Natural killer cell (primary cell): ENCODE measurements at regions of chr18 and their contacts with region 1.

Region 1: DNA sequence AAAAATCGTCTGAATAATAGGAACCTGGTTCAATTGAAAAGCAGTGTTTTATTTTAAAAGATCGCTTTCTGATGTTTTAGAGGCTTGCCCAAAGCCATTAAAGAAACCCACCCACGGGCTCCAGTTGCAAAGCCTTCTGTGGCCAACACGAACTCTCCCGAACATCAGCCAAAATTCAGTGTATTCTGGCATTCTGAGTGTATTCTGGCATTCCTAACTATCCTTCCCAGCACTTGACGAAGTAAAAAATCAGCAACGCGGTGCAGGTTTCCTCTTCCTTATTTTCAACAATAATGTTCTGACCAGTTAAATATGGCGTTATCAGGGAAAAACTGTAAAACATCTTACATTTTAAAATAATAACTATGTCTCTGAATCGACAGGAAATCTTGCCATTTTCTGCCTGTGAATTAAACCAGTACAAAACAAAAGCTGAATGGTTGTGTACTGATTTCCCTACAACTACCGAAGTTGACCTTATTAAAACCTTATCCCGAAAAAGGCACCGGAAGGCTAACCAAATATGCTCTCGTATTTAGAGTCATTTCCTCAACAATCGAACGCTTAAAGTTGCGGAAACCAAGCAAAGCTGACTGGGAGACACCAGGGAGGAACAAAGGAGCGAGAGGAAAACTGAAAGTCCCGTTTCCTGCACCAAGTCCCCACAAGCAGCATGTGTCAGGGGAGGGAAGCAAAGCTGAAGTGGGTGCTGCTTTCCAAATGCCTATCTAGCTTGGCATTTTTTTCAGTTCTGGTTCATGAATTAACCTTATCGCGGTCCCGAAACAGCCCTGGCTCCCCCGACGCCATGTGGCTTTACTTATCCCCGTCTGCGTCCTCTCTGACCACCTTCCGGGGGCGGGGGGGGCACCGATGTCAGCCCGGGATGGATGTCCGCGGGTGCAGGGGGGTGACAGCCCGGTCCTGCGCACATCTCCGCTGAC is 44.3 kb downstream of the ZNF516 start:
- DNase-seq: peak in 1 of 2 donors; percentile 34
- ATAC-seq: peak; percentile 25 to 56 (median 46)
- H3K4me3 ChIP-seq: peak overlapping the region; percentile 56
- H3K4me3 Mint-ChIP-seq: peak overlapping the region; percentile 97
- H3K27ac ChIP-seq: peak overlapping the region; percentile 30
- H3K27ac Mint-ChIP-seq: peak overlapping the region; percentile 81 to 92
- H3K4me1 ChIP-seq: peaks cover 32% of the 10 kb centered on the region
- H3K4me1 Mint-ChIP-seq: peaks cover 79 to 86% of the 10 kb centered on the region in 2 donors
- H3K27me3 ChIP-seq: no peaks in the 10 kb centered on the region
- H3K27me3 Mint-ChIP-seq: no peaks in the 10 kb centered on the region
- CTCF ChIP-seq: no peak

Region 2: DNA sequence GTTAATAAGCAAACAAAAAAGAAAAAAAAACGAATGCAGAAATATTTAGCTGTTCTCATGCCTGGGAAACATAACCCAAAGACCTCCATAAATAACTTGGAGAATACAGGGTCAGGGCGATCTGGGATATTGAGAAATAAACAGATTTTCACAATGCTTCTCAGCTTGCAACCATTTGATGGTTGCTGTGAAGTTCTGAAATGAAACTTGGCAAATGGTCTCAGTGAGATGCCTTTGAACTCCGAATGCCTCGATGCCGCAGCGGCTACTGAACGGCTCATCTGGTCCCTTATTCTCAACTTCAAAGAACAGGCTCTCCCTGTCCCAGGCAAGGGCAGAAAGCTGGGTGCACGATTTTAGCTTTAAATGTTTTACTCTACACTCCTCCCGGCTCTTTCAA is 33.8 kb before region 1 on chr18:
- intact Hi-C with region 1: loop called (anchors 5 kb)
- DNase-seq: no peak
- ATAC-seq: no peak
- H3K4me3 ChIP-seq: no peak overlapping the region
- H3K4me3 Mint-ChIP-seq: peak overlapping the region; percentile 25
- H3K27ac ChIP-seq: no peak overlapping the region
- H3K27ac Mint-ChIP-seq: peak overlapping the region in 1 of 2 donors; percentile 10
- H3K4me1 ChIP-seq: peaks cover 25% of the 10 kb centered on the region
- H3K4me1 Mint-ChIP-seq: peaks cover 68 to 80% of the 10 kb centered on the region in 2 donors
- H3K27me3 ChIP-seq: no peaks in the 10 kb centered on the region
- H3K27me3 Mint-ChIP-seq: no peaks in the 10 kb centered on the region
- CTCF ChIP-seq: no peak